ENCODE measurements at regions of chr6 and their contacts with region 1.

Region 1: GRCh38 chr6:63663147-63663877 is 27.7 kb downstream of the PHF3 start:
- DNase-seq: no peak
- ATAC-seq: peak; percentile 50
- H3K4me3 ChIP-seq: no peak overlapping the region
- H3K4me3 Mint-ChIP-seq: peak overlapping the region in 6 of 10 donors; percentile 1 to 44 (median 34)
- H3K27ac ChIP-seq: no peak overlapping the region
- H3K27ac Mint-ChIP-seq: peak overlapping the region in 5 of 9 donors; percentile 2 to 59 (median 15)
- H3K4me1 ChIP-seq: peaks cover 27 to 39% of the 10 kb centered on the region in 2 donors
- H3K4me1 Mint-ChIP-seq: peaks cover 22 to 91% (median 61%) of the 10 kb centered on the region in 7 donors
- H3K27me3 ChIP-seq: no peaks in the 10 kb centered on the region
- H3K27me3 Mint-ChIP-seq: no peaks in the 10 kb centered on the region

Region 2: GRCh38 chr6:63649847-63650265 is 13.5 kb before region 1 on chr6:
- CTCF ChIA-PET with region 1: no interaction called
- POLR2A ChIA-PET with region 1: interaction called, 5 read pairs
- intact Hi-C with region 1: loop called in 1 of 2 experiments (anchors 1 kb)
- DNase-seq: no peak
- ATAC-seq: no peak
- H3K4me3 ChIP-seq: no peak overlapping the region
- H3K4me3 Mint-ChIP-seq: peak overlapping the region in 5 of 10 donors; percentile 18 to 43 (median 39)
- H3K27ac ChIP-seq: no peak overlapping the region
- H3K27ac Mint-ChIP-seq: peak overlapping the region in 1 of 9 donors; percentile 19
- H3K4me1 ChIP-seq: peaks cover 29 to 44% of the 10 kb centered on the region in 2 donors
- H3K4me1 Mint-ChIP-seq: peaks cover 36 to 99% (median 82%) of the 10 kb centered on the region in 7 donors
- H3K27me3 ChIP-seq: no peaks in the 10 kb centered on the region
- H3K27me3 Mint-ChIP-seq: no peaks in the 10 kb centered on the region

Region 3: DNA sequence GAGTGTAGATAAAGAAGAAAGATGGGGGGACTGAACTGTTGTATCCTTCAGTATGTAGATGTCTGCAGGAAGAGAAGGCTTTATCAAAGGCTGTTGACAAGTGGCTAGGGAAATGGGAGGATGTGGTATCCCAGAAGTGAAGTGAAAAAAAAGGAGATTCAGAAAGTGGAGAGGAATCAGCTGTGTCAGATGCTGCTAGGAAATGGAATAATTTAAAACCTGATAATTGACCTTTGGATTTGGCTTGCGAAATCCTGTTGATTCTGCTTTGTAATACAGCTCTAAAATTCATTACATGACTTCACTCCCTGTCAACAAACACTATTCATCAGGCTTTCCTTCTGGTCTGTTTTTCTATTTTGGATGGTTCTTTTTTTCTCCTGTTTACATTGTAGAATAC is 14.0 kb after region 1 on chr6:
- CTCF ChIA-PET with region 1: no interaction called
- POLR2A ChIA-PET with region 1: no interaction called
- intact Hi-C with region 1: loop called in 1 of 2 experiments (anchors 1 kb)
- DNase-seq: no peak
- ATAC-seq: no peak
- H3K4me3 ChIP-seq: no peak overlapping the region
- H3K4me3 Mint-ChIP-seq: no peak overlapping the region
- H3K27ac ChIP-seq: no peak overlapping the region
- H3K27ac Mint-ChIP-seq: no peak overlapping the region
- H3K4me1 ChIP-seq: peaks cover 5 to 40% of the 10 kb centered on the region in 2 donors
- H3K4me1 Mint-ChIP-seq: peaks cover 15 to 54% (median 38%) of the 10 kb centered on the region in 7 donors
- H3K27me3 ChIP-seq: no peaks in the 10 kb centered on the region
- H3K27me3 Mint-ChIP-seq: no peaks in the 10 kb centered on the region

Region 4: GRCh38 chr6:64074981-64075380 is 411.7 kb after region 1 on chr6:
- CTCF ChIA-PET with region 1: no interaction called
- POLR2A ChIA-PET with region 1: no interaction called
- intact Hi-C with region 1: no loop called
- DNase-seq: no peak
- ATAC-seq: no peak
- H3K4me3 ChIP-seq: no peak overlapping the region
- H3K4me3 Mint-ChIP-seq: no peak overlapping the region
- H3K27ac ChIP-seq: no peak overlapping the region
- H3K27ac Mint-ChIP-seq: no peak overlapping the region
- H3K4me1 ChIP-seq: no peaks in the 10 kb centered on the region
- H3K4me1 Mint-ChIP-seq: no peaks in the 10 kb centered on the region
- H3K27me3 ChIP-seq: no peaks in the 10 kb centered on the region
- H3K27me3 Mint-ChIP-seq: no peaks in the 10 kb centered on the region